Naive thymus-derived CD4-positive, alpha-beta T cell (primary cell): ENCODE measurements at regions of chr9 and their contacts with region 1.

Region 1: GRCh38 chr9:125241000-125241862 is at the start of gene HSPA5:
- DNase-seq: peak; percentile 94 to 100 (median 99)
- ATAC-seq: peak; percentile 94
- H3K4me3 ChIP-seq: peak within 1 kb of the TSS; percentile 85
- H3K4me3 Mint-ChIP-seq: peak within 1 kb of the TSS; percentile 94 to 99 (median 98)
- H3K27ac ChIP-seq: peak within 1 kb of the TSS; percentile 97
- H3K27ac Mint-ChIP-seq: peak within 1 kb of the TSS; percentile 96 to 100 (median 99)
- H3K4me1 ChIP-seq: peaks cover 39 to 48% of the 10 kb centered on the region in 2 donors
- H3K4me1 Mint-ChIP-seq: peaks cover 27 to 49% (median 45%) of the 10 kb centered on the region in 7 donors
- H3K27me3 ChIP-seq: no peaks in the 10 kb centered on the region
- H3K27me3 Mint-ChIP-seq: peaks cover 0 to 5% (median 0%) of the 10 kb centered on the region in 5 donors
- total RNA-seq, gene HSPA5: 127 to 248 (median 155) TPM

Region 2: GRCh38 chr9:124868511-124869465 is 372.4 kb before region 1 on chr9:
- CTCF ChIA-PET with region 1: no interaction called
- POLR2A ChIA-PET with region 1: interaction called, 3 read pairs
- intact Hi-C with region 1: loop called (anchors 1 kb)
- DNase-seq: peak; percentile 84 to 99 (median 91)
- ATAC-seq: peak; percentile 89
- H3K4me3 ChIP-seq: peak overlapping the region; percentile 95
- H3K4me3 Mint-ChIP-seq: peak overlapping the region; percentile 87 to 96 (median 93)
- H3K27ac ChIP-seq: peak overlapping the region; percentile 87
- H3K27ac Mint-ChIP-seq: peak overlapping the region; percentile 82 to 98 (median 89)
- H3K4me1 ChIP-seq: peaks cover 29 to 39% of the 10 kb centered on the region in 2 donors
- H3K4me1 Mint-ChIP-seq: peaks cover 20 to 55% (median 47%) of the 10 kb centered on the region in 7 donors
- H3K27me3 ChIP-seq: no peaks in the 10 kb centered on the region
- H3K27me3 Mint-ChIP-seq: no peaks in the 10 kb centered on the region

Region 3: DNA sequence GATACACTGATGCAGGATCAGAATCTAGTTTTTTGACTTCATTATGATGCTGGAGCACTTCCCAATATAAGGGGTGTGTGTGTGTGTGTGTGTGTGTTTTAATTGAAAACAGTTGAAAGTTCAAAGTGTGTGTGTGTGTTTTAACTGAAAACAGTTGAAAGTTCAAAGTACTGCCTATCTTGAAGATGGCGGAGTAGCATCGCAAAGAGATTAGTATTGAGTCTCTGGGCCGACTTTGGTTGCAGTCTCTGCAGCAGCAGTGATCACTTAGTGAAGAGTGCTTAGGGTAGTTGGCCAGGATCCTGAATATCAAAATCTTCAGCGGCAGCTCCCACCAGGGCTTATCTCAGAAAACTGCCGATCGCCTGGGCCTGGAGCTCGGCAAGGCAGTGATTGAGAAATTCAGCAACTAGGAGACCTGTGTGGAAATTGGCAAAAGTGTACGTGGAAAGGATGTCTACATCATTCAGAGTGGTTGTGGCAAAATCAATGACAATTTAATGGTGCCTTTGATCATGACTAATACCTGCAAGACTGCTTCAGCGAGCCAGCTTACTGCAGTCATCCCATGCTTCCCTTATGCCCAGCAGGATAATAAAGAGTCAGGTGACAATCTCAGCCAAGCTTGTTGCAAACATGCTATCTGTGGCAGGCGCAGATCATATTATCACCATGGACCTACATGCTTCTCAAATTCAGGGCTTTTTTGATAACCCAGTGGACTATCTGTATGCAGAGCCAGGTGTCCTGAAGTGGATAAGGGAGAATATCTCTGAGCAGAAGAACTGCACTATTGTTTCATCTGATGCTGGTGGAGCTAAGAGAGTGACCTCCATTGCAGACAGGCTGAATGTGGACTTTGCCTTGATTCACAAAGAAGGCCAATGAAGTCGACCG is 90.6 kb before region 1 on chr9:
- CTCF ChIA-PET with region 1: no interaction called
- POLR2A ChIA-PET with region 1: interaction called, 16 read pairs
- intact Hi-C with region 1: no loop called
- DNase-seq: no peak
- ATAC-seq: no peak
- H3K4me3 ChIP-seq: no peak overlapping the region
- H3K4me3 Mint-ChIP-seq: no peak overlapping the region
- H3K27ac ChIP-seq: no peak overlapping the region
- H3K27ac Mint-ChIP-seq: peak overlapping the region in 6 of 9 donors; percentile 6 to 53 (median 41)
- H3K4me1 ChIP-seq: no peaks in the 10 kb centered on the region
- H3K4me1 Mint-ChIP-seq: peaks cover 3 to 28% (median 14%) of the 10 kb centered on the region in 7 donors
- H3K27me3 ChIP-seq: no peaks in the 10 kb centered on the region
- H3K27me3 Mint-ChIP-seq: no peaks in the 10 kb centered on the region

Region 4: DNA sequence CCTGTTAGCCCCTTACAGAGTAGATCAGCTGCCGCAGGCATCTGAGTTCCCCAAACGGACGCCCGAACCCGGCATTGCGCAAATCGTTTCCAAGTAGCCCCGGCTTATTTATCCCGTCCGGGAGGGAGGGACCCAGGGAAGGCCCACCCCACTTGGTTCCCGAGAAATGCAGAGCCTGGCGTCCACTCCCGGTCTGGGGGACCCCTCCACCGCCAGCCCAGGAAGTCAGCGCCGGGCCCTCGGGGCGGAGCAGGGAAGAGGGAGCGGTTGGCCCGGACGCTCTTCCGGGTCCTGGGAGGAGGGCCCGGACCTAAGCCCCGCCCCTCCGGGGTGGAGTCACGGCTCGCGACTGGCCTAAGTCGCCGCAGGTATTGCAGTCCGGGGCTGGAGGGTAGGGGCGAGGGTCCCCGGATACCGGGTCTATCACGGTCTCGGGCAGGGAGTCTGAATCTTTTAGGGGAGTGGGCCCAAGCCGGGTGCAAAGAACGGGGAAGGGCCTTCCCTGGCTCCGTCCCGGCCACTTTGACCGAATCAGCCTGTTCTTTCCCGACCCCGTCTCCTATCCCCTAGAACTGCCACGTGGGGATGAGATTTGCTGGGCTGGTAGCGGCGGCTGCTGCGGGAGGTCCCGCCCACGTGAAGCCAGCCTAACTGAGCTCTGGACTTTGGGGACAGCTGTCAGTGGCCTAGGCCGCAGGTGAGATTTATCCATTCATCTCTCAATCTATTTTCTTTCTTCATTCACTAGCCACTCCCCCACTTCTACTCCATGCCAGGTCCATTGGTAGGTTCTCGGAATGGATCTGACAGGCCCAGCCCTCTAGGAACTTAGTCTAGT is 40.8 kb before region 1 on chr9 and contains the start of gene RABEPK:
- CTCF ChIA-PET with region 1: interaction called, 3 read pairs
- POLR2A ChIA-PET with region 1: interaction called, 192 read pairs
- intact Hi-C with region 1: loop called (anchors 1 kb)
- DNase-seq: peak; percentile 76 to 97 (median 83)
- ATAC-seq: peak; percentile 99
- H3K4me3 ChIP-seq: peak within 1 kb of the TSS; percentile 90
- H3K4me3 Mint-ChIP-seq: peak within 1 kb of the TSS; percentile 80 to 96 (median 93)
- H3K27ac ChIP-seq: peak within 1 kb of the TSS; percentile 89
- H3K27ac Mint-ChIP-seq: peak within 1 kb of the TSS; percentile 80 to 96 (median 92)
- H3K4me1 ChIP-seq: peaks cover 20 to 34% of the 10 kb centered on the region in 2 donors
- H3K4me1 Mint-ChIP-seq: peaks cover 24 to 74% (median 56%) of the 10 kb centered on the region in 7 donors
- H3K27me3 ChIP-seq: no peaks in the 10 kb centered on the region
- H3K27me3 Mint-ChIP-seq: peaks cover 0 to 10% (median 0%) of the 10 kb centered on the region in 5 donors
- total RNA-seq, gene RABEPK: 10.7 to 19.5 (median 15.1) TPM

Region 5: GRCh38 chr9:125261501-125262293 is 20.5 kb after region 1 on chr9 and contains the start of gene GAPVD1:
- CTCF ChIA-PET with region 1: interaction called, 4 read pairs
- POLR2A ChIA-PET with region 1: interaction called, 53 read pairs
- intact Hi-C with region 1: loop called (anchors 1 kb)
- DNase-seq: peak; percentile 83 to 95 (median 89)
- ATAC-seq: peak; percentile 97
- H3K4me3 ChIP-seq: peak within 1 kb of the TSS; percentile 97
- H3K4me3 Mint-ChIP-seq: peak within 1 kb of the TSS; percentile 82 to 99 (median 98)
- H3K27ac ChIP-seq: peak within 1 kb of the TSS; percentile 94
- H3K27ac Mint-ChIP-seq: peak within 1 kb of the TSS; percentile 83 to 99 (median 94)
- H3K4me1 ChIP-seq: peaks cover 8 to 24% of the 10 kb centered on the region in 2 donors
- H3K4me1 Mint-ChIP-seq: peaks cover 21 to 48% (median 42%) of the 10 kb centered on the region in 7 donors
- H3K27me3 ChIP-seq: no peaks in the 10 kb centered on the region
- H3K27me3 Mint-ChIP-seq: no peaks in the 10 kb centered on the region
- total RNA-seq, gene GAPVD1: 57.3 to 68.9 (median 65.0) TPM

Region 6: GRCh38 chr9:125706661-125707471 is 465.6 kb after region 1 on chr9 and contains the start of gene MAPKAP1:
- CTCF ChIA-PET with region 1: no interaction called
- POLR2A ChIA-PET with region 1: no interaction called
- intact Hi-C with region 1: loop called in 1 of 2 experiments (anchors 5 kb)
- DNase-seq: peak; percentile 75 to 95 (median 84)
- ATAC-seq: peak; percentile 99
- H3K4me3 ChIP-seq: peak within 1 kb of the TSS; percentile 68
- H3K4me3 Mint-ChIP-seq: peak within 1 kb of the TSS; percentile 84 to 93 (median 88)
- H3K27ac ChIP-seq: peak within 1 kb of the TSS; percentile 77
- H3K27ac Mint-ChIP-seq: peak within 1 kb of the TSS; percentile 73 to 94 (median 87)
- H3K4me1 ChIP-seq: peaks cover 19 to 24% of the 10 kb centered on the region in 2 donors
- H3K4me1 Mint-ChIP-seq: peaks cover 21 to 59% (median 45%) of the 10 kb centered on the region in 7 donors
- H3K27me3 ChIP-seq: no peaks in the 10 kb centered on the region
- H3K27me3 Mint-ChIP-seq: peaks cover 0 to 6% (median 0%) of the 10 kb centered on the region in 5 donors
- total RNA-seq, gene MAPKAP1: 41.3 to 63.8 (median 55.8) TPM